Naive thymus-derived CD4-positive, alpha-beta T cell (primary cell): ENCODE measurements at regions of chr1 and their contacts with region 1.

Region 1: DNA sequence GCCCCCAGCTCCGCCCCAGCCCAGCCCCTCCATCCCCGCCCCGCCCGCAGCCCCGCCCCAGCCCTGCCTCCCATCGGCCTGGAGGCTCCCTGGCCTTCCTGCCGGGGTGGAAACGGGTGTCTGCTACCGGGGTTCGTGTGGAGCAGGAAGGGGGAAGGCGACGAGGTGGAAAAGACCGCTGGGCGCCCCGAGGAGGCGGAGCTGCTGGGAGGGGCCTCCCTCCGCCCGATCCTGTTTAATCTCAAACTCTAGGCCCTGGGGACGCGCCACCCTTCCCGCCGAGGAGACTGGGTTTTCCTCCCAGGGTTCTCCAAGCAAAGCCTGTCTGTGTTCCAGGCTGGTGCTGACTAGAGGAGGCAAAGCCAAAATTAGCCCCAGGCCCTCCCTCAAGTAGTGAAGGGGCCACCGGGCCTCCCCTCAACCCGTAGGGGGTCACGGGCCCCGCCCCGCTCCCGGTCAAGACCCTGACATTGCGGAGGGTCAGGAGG is 16.2 kb upstream of the TTLL10 start:
- DNase-seq: peak; percentile 22 to 72 (median 42)
- ATAC-seq: peak; percentile 73
- H3K4me3 ChIP-seq: peak overlapping the region; percentile 81
- H3K4me3 Mint-ChIP-seq: peak overlapping the region; percentile 63 to 85 (median 76)
- H3K27ac ChIP-seq: peak overlapping the region; percentile 91
- H3K27ac Mint-ChIP-seq: peak overlapping the region in 8 of 9 donors; percentile 47 to 83 (median 59)
- H3K4me1 ChIP-seq: peaks cover 4 to 5% of the 10 kb centered on the region in 2 donors
- H3K4me1 Mint-ChIP-seq: peaks cover 0 to 12% (median 7%) of the 10 kb centered on the region in 7 donors
- H3K27me3 ChIP-seq: no peaks in the 10 kb centered on the region
- H3K27me3 Mint-ChIP-seq: no peaks in the 10 kb centered on the region

Region 2: GRCh38 chr1:1069061-1069708 is 88.3 kb before region 1 on chr1:
- CTCF ChIA-PET with region 1: no interaction called
- POLR2A ChIA-PET with region 1: no interaction called
- intact Hi-C with region 1: loop called in 1 of 2 experiments (anchors 5 kb)
- DNase-seq: peak; percentile 86 to 98 (median 92)
- ATAC-seq: peak; percentile 83
- H3K4me3 ChIP-seq: peak overlapping the region; percentile 81
- H3K4me3 Mint-ChIP-seq: peak overlapping the region; percentile 52 to 88 (median 78)
- H3K27ac ChIP-seq: peak overlapping the region; percentile 73
- H3K27ac Mint-ChIP-seq: peak overlapping the region in 6 of 9 donors; percentile 36 to 88 (median 72)
- H3K4me1 ChIP-seq: peaks cover 4 to 10% of the 10 kb centered on the region in 2 donors
- H3K4me1 Mint-ChIP-seq: peaks cover 0 to 9% (median 3%) of the 10 kb centered on the region in 7 donors
- H3K27me3 ChIP-seq: no peaks in the 10 kb centered on the region
- H3K27me3 Mint-ChIP-seq: no peaks in the 10 kb centered on the region

Region 3: GRCh38 chr1:1144122-1144842 is 13.2 kb before region 1 on chr1:
- CTCF ChIA-PET with region 1: no interaction called
- POLR2A ChIA-PET with region 1: interaction called, 6 read pairs
- intact Hi-C with region 1: loop called in 1 of 2 experiments (anchors 1 kb)
- DNase-seq: peak; percentile 40 to 79 (median 75)
- ATAC-seq: peak; percentile 93
- H3K4me3 ChIP-seq: no peak overlapping the region
- H3K4me3 Mint-ChIP-seq: peak overlapping the region; percentile 48 to 75 (median 61)
- H3K27ac ChIP-seq: peak overlapping the region; percentile 83
- H3K27ac Mint-ChIP-seq: peak overlapping the region; percentile 94 to 99 (median 96)
- H3K4me1 ChIP-seq: peaks cover 0 to 21% of the 10 kb centered on the region in 2 donors
- H3K4me1 Mint-ChIP-seq: peaks cover 6 to 21% (median 8%) of the 10 kb centered on the region in 7 donors
- H3K27me3 ChIP-seq: no peaks in the 10 kb centered on the region
- H3K27me3 Mint-ChIP-seq: no peaks in the 10 kb centered on the region

Region 4: GRCh38 chr1:1200851-1201810 is 43.7 kb after region 1 on chr1:
- CTCF ChIA-PET with region 1: no interaction called
- POLR2A ChIA-PET with region 1: no interaction called
- intact Hi-C with region 1: loop called in 1 of 2 experiments (anchors 5 kb)
- DNase-seq: peak; percentile 74 to 97 (median 83)
- ATAC-seq: peak; percentile 92
- H3K4me3 ChIP-seq: peak overlapping the region; percentile 24
- H3K4me3 Mint-ChIP-seq: peak overlapping the region in 9 of 10 donors; percentile 27 to 75 (median 59)
- H3K27ac ChIP-seq: peak overlapping the region; percentile 72
- H3K27ac Mint-ChIP-seq: peak overlapping the region in 5 of 9 donors; percentile 40 to 75 (median 62)
- H3K4me1 ChIP-seq: no peaks in the 10 kb centered on the region
- H3K4me1 Mint-ChIP-seq: peaks cover 0 to 11% (median 0%) of the 10 kb centered on the region in 7 donors
- H3K27me3 ChIP-seq: no peaks in the 10 kb centered on the region
- H3K27me3 Mint-ChIP-seq: no peaks in the 10 kb centered on the region

Region 5: GRCh38 chr1:1206376-1207260 is 49.1 kb after region 1 on chr1 and contains the start of gene TNFRSF18:
- CTCF ChIA-PET with region 1: no interaction called
- POLR2A ChIA-PET with region 1: no interaction called
- intact Hi-C with region 1: loop called (anchors 1 to 5 kb)
- DNase-seq: peak in 2 of 9 donors; percentile 20 to 68
- ATAC-seq: no peak
- H3K4me3 ChIP-seq: peak within 1 kb of the TSS; percentile 6
- H3K4me3 Mint-ChIP-seq: peak within 1 kb of the TSS in 7 of 10 donors; percentile 25 to 83 (median 45)
- H3K27ac ChIP-seq: no peak within 1 kb of the TSS
- H3K27ac Mint-ChIP-seq: peak within 1 kb of the TSS in 2 of 9 donors; percentile 38 to 96
- H3K4me1 ChIP-seq: peaks cover 13 to 16% of the 10 kb centered on the region in 2 donors
- H3K4me1 Mint-ChIP-seq: peaks cover 6 to 29% (median 14%) of the 10 kb centered on the region in 7 donors
- H3K27me3 ChIP-seq: no peaks in the 10 kb centered on the region
- H3K27me3 Mint-ChIP-seq: no peaks in the 10 kb centered on the region
- total RNA-seq, gene TNFRSF18: 2.6 to 81.7 (median 12.6) TPM in 3 of 5 experiments, not detected in the others